ENCODE measurements at regions of chr1 and their contacts with region 1.

Region 1: GRCh38 chr1:6199298-6200187 is at the start of gene RPL22:
- DNase-seq: peak; percentile 99
- H3K4me3 ChIP-seq: peak within 1 kb of the TSS; percentile 93 to 100 (median 100)
- H3K27ac ChIP-seq: peak within 1 kb of the TSS; percentile 77 to 85 (median 83)
- H3K4me1 ChIP-seq: peaks cover 0 to 32% (median 29%) of the 10 kb centered on the region in 4 donors
- H3K27me3 ChIP-seq: no peaks in the 10 kb centered on the region
- CTCF ChIP-seq: no peak
- EP300 ChIP-seq: no peak
- POLR2A ChIP-seq: peak; percentile 42 to 47
- total RNA-seq, gene RPL22: 166 to 267 (median 219) TPM

Region 2: DNA sequence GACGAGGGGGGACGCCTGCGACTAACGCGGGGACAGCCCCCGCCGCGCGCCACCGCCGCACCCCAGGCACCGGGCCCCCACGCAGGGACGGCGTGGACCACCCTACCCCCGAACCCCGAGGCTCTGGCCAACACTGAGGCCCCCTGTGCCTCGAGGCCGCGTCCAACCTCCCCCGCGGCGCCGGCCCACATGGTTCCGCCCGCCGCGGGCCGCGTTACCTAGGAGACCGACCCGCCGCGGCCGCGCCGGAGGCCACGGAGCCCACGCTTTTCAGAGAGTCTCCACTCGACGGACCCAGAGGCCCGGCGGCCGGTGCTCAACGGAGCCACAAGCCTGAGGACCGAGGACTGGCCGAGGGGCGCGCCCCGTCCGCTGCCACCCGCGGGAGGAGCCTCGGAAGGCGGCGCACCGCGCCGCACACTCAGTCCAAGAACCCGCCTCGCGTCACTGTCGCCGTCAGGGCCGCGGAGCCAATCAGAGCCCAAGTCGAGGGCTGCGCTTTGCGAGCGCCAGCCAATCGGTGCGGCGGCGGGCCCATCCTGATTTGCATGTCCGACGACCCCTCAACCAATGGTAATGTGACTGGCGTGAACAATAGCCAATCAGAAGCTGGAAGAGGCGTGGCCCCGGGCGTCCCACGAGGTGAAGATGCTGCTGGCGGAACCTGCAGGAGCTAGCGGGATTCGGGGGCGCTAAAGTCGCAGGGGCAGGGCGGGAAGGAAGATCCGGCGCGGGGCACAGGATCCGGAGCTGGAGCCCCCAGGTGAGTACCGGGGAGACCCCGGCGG is 207.3 kb before region 1 on chr1 and contains the start of gene NPHP4:
- intact Hi-C with region 1: loop called (anchors 5 kb)
- DNase-seq: peak; percentile 100
- H3K4me3 ChIP-seq: peak within 1 kb of the TSS; percentile 51 to 91 (median 88)
- H3K27ac ChIP-seq: peak within 1 kb of the TSS; percentile 90 to 96 (median 94)
- H3K4me1 ChIP-seq: peaks cover 0 to 24% (median 21%) of the 10 kb centered on the region in 4 donors
- H3K27me3 ChIP-seq: no peaks in the 10 kb centered on the region
- CTCF ChIP-seq: no peak
- EP300 ChIP-seq: no peak
- POLR2A ChIP-seq: no peak
- total RNA-seq, gene NPHP4: 4.9 to 12.2 (median 8.8) TPM

Region 3: GRCh38 chr1:6026095-6026809 is 173.3 kb before region 1 on chr1:
- intact Hi-C with region 1: no loop called
- DNase-seq: peak; percentile 83
- H3K4me3 ChIP-seq: peak overlapping the region in 3 of 4 donors; percentile 2 to 34 (median 23)
- H3K27ac ChIP-seq: peak overlapping the region in 2 of 4 donors; percentile 20 to 28
- H3K4me1 ChIP-seq: no peaks in the 10 kb centered on the region
- H3K27me3 ChIP-seq: peaks cover 0 to 27% (median 2%) of the 10 kb centered on the region in 3 donors
- CTCF ChIP-seq: no peak
- EP300 ChIP-seq: no peak
- POLR2A ChIP-seq: no peak

Region 4: DNA sequence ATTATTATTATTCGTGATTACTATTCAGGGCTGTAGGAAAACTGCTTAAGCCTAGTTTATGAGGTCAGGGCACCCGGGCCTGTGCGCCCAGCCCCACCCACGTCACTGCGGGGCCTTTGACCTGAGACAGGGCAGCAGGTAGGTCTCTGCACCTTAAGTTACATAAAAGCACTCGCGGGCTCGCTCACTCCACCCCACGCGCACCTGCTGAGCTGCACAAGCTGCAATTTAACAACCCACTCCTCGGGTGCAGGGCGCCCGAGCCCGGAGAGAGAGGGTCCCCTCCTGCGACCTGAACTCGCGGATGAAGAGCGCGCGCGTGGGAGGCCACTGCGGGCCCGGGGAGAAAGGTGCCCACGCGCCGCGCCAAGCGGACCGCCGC is 35.7 kb after region 1 on chr1:
- intact Hi-C with region 1: loop called (anchors 2 kb)
- DNase-seq: no peak
- H3K4me3 ChIP-seq: peak overlapping the region; percentile 49 to 75 (median 68)
- H3K27ac ChIP-seq: peak overlapping the region in 3 of 4 donors; percentile 60 to 78 (median 72)
- H3K4me1 ChIP-seq: peaks cover 0 to 19% (median 14%) of the 10 kb centered on the region in 4 donors
- H3K27me3 ChIP-seq: peaks cover 6 to 20% (median 13%) of the 10 kb centered on the region in 3 donors
- CTCF ChIP-seq: no peak
- EP300 ChIP-seq: no peak
- POLR2A ChIP-seq: no peak